PC-3 (cell line): ENCODE measurements at regions of chr6 and their contacts with region 1.

Region 1: GRCh38 chr6:135257631-135258405 is 76.7 kb downstream of the MYB start:
- DNase-seq: no peak
- ATAC-seq: peak; percentile 54
- H3K4me3 ChIP-seq: no peak overlapping the region
- H3K27ac ChIP-seq: no peak overlapping the region
- H3K4me1 ChIP-seq: 0 out of 2 replicates have a peak, but pooled peaks cover 8% of the 10 kb centered on the region
- H3K27me3 ChIP-seq: no peaks in the 10 kb centered on the region
- CTCF ChIP-seq: peak; percentile 32; the same call in 1 of the 2 replicates

Region 2: DNA sequence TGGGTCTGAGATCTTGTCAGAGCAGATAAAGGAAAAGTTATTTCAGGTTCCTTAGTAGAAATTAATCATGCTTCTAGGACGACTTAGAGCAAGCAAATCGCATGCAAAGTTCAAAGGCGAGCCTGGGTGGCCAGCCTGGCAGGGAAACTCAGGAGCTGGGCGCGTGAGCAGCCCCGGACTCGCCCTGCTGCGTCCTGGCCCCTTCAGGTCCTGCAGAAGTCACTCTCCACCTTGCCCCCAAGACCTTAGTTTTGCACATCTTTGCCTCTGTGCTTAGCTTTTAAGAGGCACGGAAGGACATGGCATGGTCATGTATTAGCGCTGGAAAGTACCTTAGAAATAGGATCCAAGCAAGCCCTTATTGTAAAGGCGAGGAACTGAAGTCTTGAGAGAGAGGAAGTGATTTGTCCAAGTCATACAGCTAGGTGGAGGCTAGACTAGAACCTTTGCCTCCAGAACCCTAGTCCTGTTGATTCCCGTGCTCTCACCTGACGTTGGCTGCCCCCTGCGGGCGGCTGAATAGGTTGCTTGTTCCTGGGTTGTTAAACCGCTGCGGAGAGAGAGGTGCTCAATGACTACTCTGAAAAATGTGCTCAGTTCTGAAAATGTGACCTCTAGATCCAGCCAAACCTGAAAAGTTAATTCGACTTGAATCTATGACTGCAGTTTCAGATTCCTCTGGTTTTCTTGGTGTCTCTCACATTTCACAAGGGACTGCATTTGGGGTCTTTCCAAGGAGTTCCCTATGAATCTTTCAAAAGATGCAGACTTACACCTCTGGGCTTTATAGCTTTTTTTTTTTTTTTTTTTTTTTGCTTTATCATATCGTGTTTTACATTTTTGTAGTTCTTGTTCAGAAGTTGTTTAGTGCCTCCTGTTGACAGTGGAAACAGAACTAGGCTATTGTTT is 74.0 kb before region 1 on chr6:
- CTCF ChIA-PET with region 1: no interaction called
- POLR2A ChIA-PET with region 1: no interaction called
- intact Hi-C with region 1: loop called (anchors 5 kb)
- DNase-seq: peak; percentile 77
- ATAC-seq: peak; percentile 51
- H3K4me3 ChIP-seq: peak overlapping the region; percentile 78
- H3K27ac ChIP-seq: no peak overlapping the region
- H3K4me1 ChIP-seq: no peaks in the 10 kb centered on the region
- H3K27me3 ChIP-seq: no peaks in the 10 kb centered on the region
- CTCF ChIP-seq: peak; percentile 73